Mammary epithelial cell (primary cell): ENCODE measurements at regions of chrX and their contacts with region 1.

Region 1: GRCh38 chrX:2664502-2664901 is 26.6 kb upstream of the CD99 start:
- DNase-seq: no peak
- H3K4me3 ChIP-seq: no peak overlapping the region
- H3K27ac ChIP-seq: no peak overlapping the region
- H3K4me1 ChIP-seq: no peaks in the 10 kb centered on the region
- H3K27me3 ChIP-seq: no peaks in the 10 kb centered on the region
- CTCF ChIP-seq: no peak

Region 2: DNA sequence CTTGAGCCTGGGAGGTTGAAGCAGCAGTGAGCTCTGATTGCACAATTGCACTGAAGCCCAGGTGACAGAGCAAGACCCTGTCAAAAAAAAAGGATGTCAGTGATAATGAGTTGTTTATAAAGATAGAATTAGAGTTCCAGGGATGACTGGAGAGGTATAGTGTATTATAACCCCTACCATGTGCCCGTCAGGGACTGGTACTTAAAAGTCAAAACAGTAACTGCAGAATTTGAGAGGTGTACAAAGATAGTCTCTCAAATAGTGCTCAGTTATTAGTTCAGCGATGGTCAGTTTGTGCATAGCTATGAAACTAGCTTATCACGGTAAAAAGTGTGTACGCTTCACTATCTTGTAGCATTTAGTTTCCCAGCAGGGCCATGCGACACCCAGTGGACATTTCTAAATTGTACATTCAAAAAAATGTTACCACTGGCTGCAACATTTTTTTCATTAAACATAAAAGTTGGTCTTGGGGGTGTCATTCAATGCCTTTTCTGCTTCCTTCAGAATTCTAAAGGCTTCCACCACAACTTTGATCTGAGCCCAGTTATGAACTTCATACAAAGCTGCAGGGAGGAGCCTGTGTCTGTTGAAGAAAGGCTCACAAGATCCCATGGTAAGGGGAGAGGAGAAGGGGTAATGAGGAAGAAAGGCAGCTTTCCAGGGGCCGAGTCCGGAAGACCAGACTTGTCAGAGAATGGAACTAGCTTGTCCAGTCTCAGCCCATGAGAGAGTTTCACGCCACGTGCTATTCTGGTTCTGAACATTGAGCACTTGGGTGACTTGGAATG is 155.0 kb after region 1 on chrX:
- CTCF ChIA-PET with region 1: no interaction called
- dilution Hi-C with region 1: no loop called
- in situ Hi-C with region 1: loop called in 1 of 2 experiments (anchors 25 kb)
- intact Hi-C with region 1: no loop called
- DNase-seq: peak; percentile 12
- H3K4me3 ChIP-seq: no peak overlapping the region
- H3K27ac ChIP-seq: no peak overlapping the region
- H3K4me1 ChIP-seq: no peaks in the 10 kb centered on the region
- H3K27me3 ChIP-seq: no peaks in the 10 kb centered on the region
- CTCF ChIP-seq: peak in 1 of 2 donors; percentile 25

Region 3: GRCh38 chrX:2984344-2984743 is 319.8 kb after region 1 on chrX:
- CTCF ChIA-PET with region 1: no interaction called
- dilution Hi-C with region 1: no loop called
- in situ Hi-C with region 1: no loop called
- intact Hi-C with region 1: no loop called
- DNase-seq: no peak
- H3K4me3 ChIP-seq: no peak overlapping the region
- H3K27ac ChIP-seq: no peak overlapping the region
- H3K4me1 ChIP-seq: no peaks in the 10 kb centered on the region
- H3K27me3 ChIP-seq: no peaks in the 10 kb centered on the region
- CTCF ChIP-seq: no peak